ENCODE measurements at regions of chr16 and their contacts with region 1.

Region 1: DNA sequence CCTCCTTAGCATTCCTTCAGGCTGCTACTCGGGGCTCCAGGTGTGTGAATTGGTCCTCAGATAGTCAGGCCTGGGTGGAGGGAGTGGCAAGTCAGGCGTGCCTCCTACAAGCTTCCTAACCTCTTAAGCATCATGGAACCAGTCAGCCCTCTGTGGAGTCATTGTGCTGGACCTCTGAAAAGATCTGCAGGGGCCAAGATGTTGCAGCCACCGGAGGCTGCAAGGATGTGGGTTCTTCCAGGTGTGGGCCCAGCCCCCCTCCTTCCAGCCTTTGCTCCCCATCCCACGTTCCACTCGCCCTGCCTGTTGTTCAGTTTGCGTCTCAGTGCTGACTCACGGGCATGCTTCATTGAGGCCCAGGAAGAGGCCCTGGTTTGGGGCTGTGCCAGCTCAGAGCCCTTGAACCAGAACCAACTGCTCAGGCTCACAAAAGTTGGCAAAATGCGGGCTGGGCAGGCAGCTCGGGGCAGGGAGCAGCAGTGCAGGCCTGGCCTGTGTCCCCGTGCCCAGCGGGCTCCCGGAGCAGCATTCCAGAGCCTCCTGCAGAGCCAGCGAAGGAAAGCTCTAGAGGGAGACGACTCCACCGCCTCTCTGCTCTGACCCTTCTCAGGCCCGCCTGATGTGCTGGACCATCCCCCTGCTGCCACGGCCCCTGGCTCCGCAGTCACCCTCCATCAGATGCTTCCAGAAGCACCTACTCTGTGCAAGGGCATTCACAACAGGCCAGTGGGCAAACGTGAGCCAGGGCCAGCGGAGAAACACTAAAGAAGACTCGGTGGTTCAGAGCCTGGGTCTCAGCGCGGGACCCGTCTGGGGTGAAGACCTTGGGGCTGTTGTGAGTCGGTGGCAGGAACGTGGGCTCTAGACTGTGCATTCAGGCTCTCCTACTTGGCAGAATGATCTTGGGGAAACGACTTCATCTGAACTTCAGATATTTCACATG is 7.5 kb downstream of the LDHD start:
- DNase-seq: peak; percentile 92
- ATAC-seq: peak; percentile 54

Region 2: GRCh38 chr16:74874912-74875546 is 234.0 kb before region 1 on chr16:
- intact Hi-C with region 1: no loop called
- DNase-seq: peak; percentile 65
- ATAC-seq: peak; percentile 91

Region 3: GRCh38 chr16:74999609-75000480 is 109.2 kb before region 1 on chr16:
- intact Hi-C with region 1: loop called (anchors 5 kb)
- DNase-seq: peak; percentile 64
- ATAC-seq: peak; percentile 33

Region 4: GRCh38 chr16:75206749-75207451 is 97.8 kb after region 1 on chr16 and contains the start of gene CTRB2:
- intact Hi-C with region 1: no loop called
- DNase-seq: no peak
- ATAC-seq: peak; percentile 12
- total RNA-seq, gene CTRB2: not detected

Measured in left ventricle myocardium superior (tissue), 1 donor.